Activated CD4-positive, alpha-beta memory T cell treated with anti-CD3 and anti-CD28 coated beads, Interleukin-2, amount 10 ng/mL, durations not matched to agents 7 days and 5 days (primary cell): ENCODE measurements at regions of chr1 and their contacts with region 1.

Region 1: GRCh38 chr1:205711104-205712020 is 31.1 kb upstream of the SLC45A3 start:
- DNase-seq: peak; percentile 64
- H3K4me3 Mint-ChIP-seq: no peak overlapping the region
- H3K27ac Mint-ChIP-seq: peak overlapping the region; percentile 1
- H3K4me1 Mint-ChIP-seq: peaks cover 15% of the 10 kb centered on the region
- H3K27me3 Mint-ChIP-seq: no peaks in the 10 kb centered on the region

Region 2: GRCh38 chr1:205430696-205431305 is 280.6 kb before region 1 on chr1:
- CTCF ChIA-PET with region 1: no interaction called
- POLR2A ChIA-PET with region 1: no interaction called
- DNase-seq: peak; percentile 63
- H3K4me3 Mint-ChIP-seq: peak overlapping the region; percentile 76
- H3K27ac Mint-ChIP-seq: no peak overlapping the region
- H3K4me1 Mint-ChIP-seq: peaks cover 10% of the 10 kb centered on the region
- H3K27me3 Mint-ChIP-seq: peaks cover 30% of the 10 kb centered on the region

Region 3: DNA sequence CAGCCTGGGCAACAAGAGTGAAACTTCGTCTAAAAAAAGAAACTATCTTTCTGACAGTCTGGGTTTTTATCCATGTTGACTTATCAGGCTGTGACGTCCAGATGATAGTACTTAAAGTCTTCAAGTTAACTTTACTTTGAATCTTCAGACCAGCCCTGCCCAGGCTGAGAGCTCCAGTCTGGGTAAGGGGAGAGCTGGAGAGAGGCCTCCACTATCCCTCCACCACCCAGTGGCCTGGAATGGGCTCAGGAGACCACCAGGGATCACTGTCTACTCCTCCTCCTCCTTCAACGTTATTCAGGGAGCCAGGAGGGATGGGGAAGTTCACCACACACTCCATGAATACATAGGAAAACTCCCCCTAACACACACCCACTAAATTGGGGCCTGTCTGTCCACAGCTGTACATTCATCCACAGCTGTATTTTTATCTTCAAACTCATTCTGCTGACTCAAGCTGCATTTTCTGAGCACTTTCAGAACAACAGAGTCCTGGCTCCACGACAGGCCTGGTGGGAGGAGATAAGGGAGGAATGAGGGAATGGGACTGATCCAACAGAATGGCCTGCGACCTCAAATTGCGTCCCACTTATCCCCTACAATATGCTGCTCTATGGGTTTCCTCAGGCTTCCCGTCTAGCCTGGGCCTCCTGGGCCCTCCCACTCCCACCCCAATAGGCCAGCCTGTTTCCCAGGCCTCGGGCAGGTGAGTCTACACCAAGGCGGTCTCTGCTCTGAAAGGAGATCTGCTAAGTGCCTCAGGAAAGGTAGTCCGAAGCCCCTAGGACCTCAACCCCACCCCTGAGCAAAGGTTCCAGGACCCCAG is 32.9 kb before region 1 on chr1:
- CTCF ChIA-PET with region 1: interaction called, 14 read pairs
- POLR2A ChIA-PET with region 1: no interaction called
- DNase-seq: no peak
- H3K4me3 Mint-ChIP-seq: peak overlapping the region; percentile 74
- H3K27ac Mint-ChIP-seq: no peak overlapping the region
- H3K4me1 Mint-ChIP-seq: peaks cover 13% of the 10 kb centered on the region
- H3K27me3 Mint-ChIP-seq: peaks cover 14% of the 10 kb centered on the region

Region 4: DNA sequence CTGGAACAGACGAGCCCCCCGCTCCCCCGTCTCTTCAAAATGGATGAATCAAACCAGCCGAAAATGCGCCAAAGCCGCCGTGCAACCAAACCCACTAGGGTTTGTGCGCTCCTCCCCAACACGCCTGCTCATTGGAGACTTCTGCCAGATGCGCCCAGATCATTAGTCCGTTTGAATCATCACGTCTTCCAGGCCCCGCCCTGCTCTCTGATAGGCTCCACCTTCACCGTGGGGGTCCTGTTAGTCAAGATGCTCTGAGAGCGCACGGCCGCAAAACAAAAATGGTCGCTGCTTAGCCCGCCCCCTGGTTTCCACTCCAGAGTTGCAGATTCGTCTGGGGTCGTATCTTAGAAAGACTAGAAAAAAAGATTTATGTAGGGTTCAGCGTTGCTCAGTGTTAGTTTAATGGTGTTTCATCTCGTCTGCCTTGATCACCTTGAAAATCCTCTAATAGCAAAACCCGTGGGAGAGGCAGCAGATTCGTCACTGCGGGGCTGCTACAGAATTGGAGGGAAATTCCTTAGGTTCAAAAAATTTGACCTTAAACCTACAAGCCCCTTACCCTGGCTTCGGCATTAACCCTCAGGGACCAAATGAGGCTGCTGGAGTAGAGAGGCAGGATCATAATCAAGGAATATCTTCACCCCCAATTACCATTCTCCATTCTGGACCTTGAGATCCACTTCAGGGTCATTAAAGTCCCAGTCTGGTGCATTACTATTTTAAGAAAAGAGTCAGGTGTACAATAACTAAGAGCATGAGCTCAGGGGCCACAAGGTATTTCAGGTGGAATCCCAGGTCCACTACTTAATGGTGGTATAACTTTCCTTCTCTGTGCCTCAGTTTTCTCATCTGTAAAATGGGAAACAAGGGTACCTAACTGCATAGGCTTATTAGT is 39.0 kb after region 1 on chr1 and contains the start of gene NUCKS1:
- CTCF ChIA-PET with region 1: interaction called, 6 read pairs
- POLR2A ChIA-PET with region 1: interaction called, 13 read pairs
- DNase-seq: peak; percentile 97
- H3K4me3 Mint-ChIP-seq: peak within 1 kb of the TSS; percentile 87
- H3K27ac Mint-ChIP-seq: peak within 1 kb of the TSS; percentile 96
- H3K4me1 Mint-ChIP-seq: peaks cover 41% of the 10 kb centered on the region
- H3K27me3 Mint-ChIP-seq: no peaks in the 10 kb centered on the region
- total RNA-seq, gene NUCKS1: 163 to 185 TPM

Region 5: GRCh38 chr1:205782627-205783412 is 71.5 kb after region 1 on chr1:
- CTCF ChIA-PET with region 1: interaction called, 14 read pairs
- POLR2A ChIA-PET with region 1: interaction called, 7 read pairs
- DNase-seq: peak; percentile 32
- H3K4me3 Mint-ChIP-seq: no peak overlapping the region
- H3K27ac Mint-ChIP-seq: peak overlapping the region; percentile 10
- H3K4me1 Mint-ChIP-seq: peaks cover 15% of the 10 kb centered on the region
- H3K27me3 Mint-ChIP-seq: no peaks in the 10 kb centered on the region